AG04449 (cell line): ENCODE measurements at regions of chr1 and their contacts with region 1.

Region 1: GRCh38 chr1:154324669-154325582 is at the start of gene ATP8B2:
- DNase-seq: no peak
- H3K4me3 ChIP-seq: peak within 1 kb of the TSS; percentile 95
- CTCF ChIP-seq: peak; percentile 94

Region 2: GRCh38 chr1:154219541-154219940 is 105.4 kb before region 1 on chr1:
- CTCF ChIA-PET with region 1: interaction called, 10 read pairs
- POLR2A ChIA-PET with region 1: no interaction called
- DNase-seq: no peak
- H3K4me3 ChIP-seq: peak overlapping the region; percentile 97
- CTCF ChIP-seq: no peak

Region 3: GRCh38 chr1:154272217-154272998 is 52.5 kb before region 1 on chr1 and contains the start of gene HAX1:
- CTCF ChIA-PET with region 1: interaction called, 65 read pairs
- POLR2A ChIA-PET with region 1: no interaction called
- DNase-seq: peak; percentile 75
- H3K4me3 ChIP-seq: peak within 1 kb of the TSS; percentile 97
- CTCF ChIP-seq: peak; percentile 78

Region 4: DNA sequence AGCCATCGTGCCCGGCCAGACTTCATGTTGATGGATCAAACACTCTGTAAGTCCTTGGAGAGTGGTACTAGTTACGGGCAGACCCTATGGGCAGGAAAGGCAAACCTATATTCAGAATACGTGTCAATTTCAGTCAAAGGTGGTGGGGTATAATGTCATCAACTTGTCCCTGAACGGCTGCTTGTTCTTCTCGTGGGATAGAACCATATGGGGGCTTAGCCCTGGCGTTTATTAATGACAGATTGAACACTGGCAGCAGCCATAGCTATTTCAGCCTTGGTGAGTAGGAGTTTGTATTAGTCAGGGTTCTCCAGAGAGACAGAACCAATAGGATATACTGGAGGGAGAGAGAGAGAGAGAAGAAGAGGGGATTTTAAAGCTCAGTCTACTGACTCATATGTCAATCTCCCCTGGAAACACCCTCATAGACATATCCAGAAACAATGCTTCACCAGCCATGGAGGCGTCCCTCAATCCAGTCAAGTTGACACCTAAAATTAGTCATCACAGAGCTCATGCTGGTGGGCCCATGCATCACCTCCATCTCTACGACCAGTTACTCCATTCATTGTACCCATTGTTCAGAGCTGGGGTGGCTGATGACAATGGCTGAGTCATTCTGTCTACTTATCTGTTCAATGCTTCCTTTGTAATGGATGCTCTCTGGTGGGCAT is 20.1 kb before region 1 on chr1:
- CTCF ChIA-PET with region 1: interaction called, 18 read pairs
- POLR2A ChIA-PET with region 1: no interaction called
- DNase-seq: no peak
- H3K4me3 ChIP-seq: no peak overlapping the region
- CTCF ChIP-seq: no peak

Region 5: DNA sequence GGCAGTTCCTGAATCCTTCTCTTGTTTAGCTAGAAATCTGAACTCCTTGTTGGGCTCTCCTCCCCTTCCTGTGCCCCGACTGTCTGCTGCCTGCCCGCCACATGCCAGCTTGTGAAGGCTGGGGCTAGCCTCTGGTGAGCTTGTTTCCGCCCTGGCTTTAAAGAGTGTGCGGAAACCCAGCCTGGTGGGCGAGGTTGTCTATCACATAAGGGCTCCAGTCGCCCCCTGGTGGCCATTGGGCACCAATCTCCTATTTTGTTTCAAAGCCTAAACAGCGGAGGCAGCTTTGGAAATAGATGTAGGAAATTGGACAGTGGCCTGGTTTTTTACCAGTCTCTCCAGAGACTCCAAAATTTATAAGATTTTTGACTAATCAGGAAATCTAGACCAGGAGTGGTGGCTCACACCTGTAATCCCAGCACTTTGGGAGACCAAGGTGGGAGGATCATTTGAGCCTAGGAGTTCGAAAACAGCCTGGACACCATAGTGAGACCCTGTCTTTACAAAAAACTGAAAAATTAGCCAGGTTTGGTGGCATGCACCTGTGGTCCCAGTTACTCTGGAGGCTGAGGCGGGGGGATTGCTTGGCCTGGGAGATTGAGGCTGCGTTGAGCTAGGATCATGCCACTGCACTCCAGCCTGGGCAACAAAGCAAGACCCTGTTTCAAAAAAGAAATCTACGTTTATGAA is 10.2 kb after region 1 on chr1:
- CTCF ChIA-PET with region 1: interaction called, 546 read pairs
- POLR2A ChIA-PET with region 1: interaction called, 11 read pairs
- DNase-seq: no peak
- H3K4me3 ChIP-seq: no peak overlapping the region
- CTCF ChIP-seq: peak; percentile 81